CD4-positive, alpha-beta T cell (primary cell): ENCODE measurements at regions of chr10 and their contacts with region 1.

Region 1: GRCh38 chr10:123154092-123154921 is at the start of gene BUB3:
- DNase-seq: peak; percentile 80 to 99 (median 91)
- ATAC-seq: peak; percentile 89
- H3K4me3 ChIP-seq: peak within 1 kb of the TSS; percentile 95
- H3K4me3 Mint-ChIP-seq: peak within 1 kb of the TSS; percentile 100
- H3K27ac ChIP-seq: peak within 1 kb of the TSS; percentile 71 to 85
- H3K27ac Mint-ChIP-seq: peak within 1 kb of the TSS; percentile 97
- H3K4me1 ChIP-seq: peaks cover 52% of the 10 kb centered on the region
- H3K4me1 Mint-ChIP-seq: peaks cover 79% of the 10 kb centered on the region
- H3K27me3 ChIP-seq: peaks cover 21 to 22% of the 10 kb centered on the region in 2 experiments
- H3K27me3 Mint-ChIP-seq: peaks cover 23% of the 10 kb centered on the region
- CTCF ChIP-seq: no peak
- total RNA-seq, gene BUB3: 167 to 178 TPM

Region 2: DNA sequence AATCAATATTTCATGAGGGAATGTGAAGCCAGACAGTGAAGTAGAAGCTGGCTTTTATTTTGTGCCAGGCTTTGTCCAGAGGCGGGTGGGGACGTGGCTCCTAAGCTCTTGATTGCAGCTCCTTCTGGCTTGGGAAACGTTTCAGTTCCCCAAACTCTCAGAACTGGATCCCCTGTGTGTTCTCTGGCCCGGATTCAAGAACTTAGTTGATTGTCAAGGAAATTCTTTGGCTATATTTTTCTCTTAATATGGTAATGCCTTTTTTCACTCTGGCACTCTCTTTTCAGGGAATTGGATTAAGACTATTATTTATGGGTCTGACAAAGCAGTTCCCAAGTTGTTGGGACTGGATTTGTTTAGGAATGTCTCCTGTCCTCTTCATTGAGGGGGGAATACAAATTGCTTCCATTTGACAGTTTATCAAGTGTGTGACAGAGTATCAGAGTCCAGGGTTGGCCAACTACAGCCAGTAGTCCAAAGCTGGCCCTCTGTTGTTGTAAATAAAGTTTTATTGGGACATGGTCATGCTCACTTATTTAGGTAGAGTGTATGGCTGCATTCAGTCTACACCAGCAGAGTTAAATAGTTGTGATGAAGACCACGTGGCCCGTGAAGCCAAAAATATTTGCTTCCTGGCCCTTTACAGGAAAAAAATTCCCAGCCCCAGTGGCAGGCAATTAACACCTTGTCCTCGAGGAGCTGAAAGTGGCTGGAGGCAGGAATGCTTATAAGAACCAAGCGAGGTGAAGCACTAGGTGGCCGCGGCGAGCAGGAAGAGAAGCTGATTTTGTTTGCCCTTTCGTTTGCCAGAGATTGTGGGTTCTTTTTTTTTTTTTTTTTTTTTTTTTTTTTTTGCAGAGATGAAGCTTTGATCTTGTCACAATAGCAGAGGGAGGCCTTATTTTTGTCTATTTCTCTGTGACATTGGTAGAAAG is 658.6 kb before region 1 on chr10:
- CTCF ChIA-PET with region 1: no interaction called
- POLR2A ChIA-PET with region 1: no interaction called
- intact Hi-C with region 1: no loop called
- DNase-seq: peak in 6 of 14 experiments; percentile 12 to 64 (median 36)
- ATAC-seq: no peak
- H3K4me3 ChIP-seq: no peak overlapping the region
- H3K4me3 Mint-ChIP-seq: peak overlapping the region; percentile 16
- H3K27ac ChIP-seq: no peak overlapping the region
- H3K27ac Mint-ChIP-seq: peak overlapping the region; percentile 45
- H3K4me1 ChIP-seq: peaks cover 33% of the 10 kb centered on the region
- H3K4me1 Mint-ChIP-seq: peaks cover 19% of the 10 kb centered on the region
- H3K27me3 ChIP-seq: no peaks in the 10 kb centered on the region
- H3K27me3 Mint-ChIP-seq: peaks cover 7% of the 10 kb centered on the region
- CTCF ChIP-seq: no peak

Region 3: DNA sequence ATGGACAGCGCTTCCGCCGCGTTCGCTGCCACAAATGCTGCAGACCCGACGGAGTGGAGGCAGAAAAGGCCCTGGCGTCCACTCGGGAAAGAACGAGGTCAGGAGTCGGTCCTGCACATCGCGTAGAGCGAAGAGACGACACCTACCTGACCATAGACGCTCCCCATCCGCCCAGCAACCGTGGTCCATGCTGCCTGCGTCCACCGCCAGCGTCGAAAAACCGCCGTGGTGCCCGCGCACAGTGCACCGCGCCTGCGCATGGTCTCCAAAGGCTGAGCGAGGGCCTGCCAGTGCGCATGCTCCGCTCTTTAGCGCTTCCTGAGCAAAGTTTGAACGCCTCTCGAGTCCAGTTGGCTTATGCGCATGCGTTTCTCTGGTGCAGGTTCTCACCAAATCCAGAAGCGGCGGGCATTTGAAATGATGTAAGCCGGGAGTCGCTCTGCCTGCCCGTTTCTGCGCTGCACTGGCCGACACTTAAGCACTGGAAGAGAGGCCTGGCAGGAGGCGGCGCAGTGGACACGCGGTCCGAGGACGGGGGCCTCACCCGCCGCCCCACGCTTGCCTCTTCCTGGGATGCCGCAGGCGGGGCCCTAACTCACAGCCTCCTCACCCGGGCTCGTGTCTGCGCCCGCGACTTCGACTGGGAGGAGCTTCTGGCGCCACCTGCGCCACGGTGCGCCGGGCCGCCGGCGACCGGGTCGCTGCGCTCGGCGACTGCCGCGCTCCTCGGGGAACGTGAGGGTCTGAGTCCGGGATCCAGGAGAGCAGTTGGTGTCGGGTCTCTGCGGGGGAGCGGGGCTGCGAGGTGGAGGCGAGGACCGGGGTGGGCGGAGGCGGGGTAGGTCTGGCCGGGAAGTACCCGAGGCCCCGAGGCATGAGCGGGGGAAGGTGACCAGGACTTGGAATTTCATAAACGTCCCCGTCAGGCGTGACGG is 274.7 kb before region 1 on chr10 and contains the start of gene FAM24B:
- CTCF ChIA-PET with region 1: no interaction called
- POLR2A ChIA-PET with region 1: interaction called, 4 read pairs
- intact Hi-C with region 1: loop called in 1 of 2 experiments (anchors 5 kb)
- DNase-seq: peak; percentile 87 to 98 (median 94)
- ATAC-seq: peak; percentile 84
- H3K4me3 ChIP-seq: peak within 1 kb of the TSS; percentile 80
- H3K4me3 Mint-ChIP-seq: peak within 1 kb of the TSS; percentile 86
- H3K27ac ChIP-seq: peak within 1 kb of the TSS; percentile 70 to 75
- H3K27ac Mint-ChIP-seq: peak within 1 kb of the TSS; percentile 79
- H3K4me1 ChIP-seq: peaks cover 19% of the 10 kb centered on the region
- H3K4me1 Mint-ChIP-seq: peaks cover 55% of the 10 kb centered on the region
- H3K27me3 ChIP-seq: no peaks in the 10 kb centered on the region
- H3K27me3 Mint-ChIP-seq: no peaks in the 10 kb centered on the region
- CTCF ChIP-seq: no peak
- total RNA-seq, gene FAM24B: 6.8 to 7.1 TPM

Region 4: DNA sequence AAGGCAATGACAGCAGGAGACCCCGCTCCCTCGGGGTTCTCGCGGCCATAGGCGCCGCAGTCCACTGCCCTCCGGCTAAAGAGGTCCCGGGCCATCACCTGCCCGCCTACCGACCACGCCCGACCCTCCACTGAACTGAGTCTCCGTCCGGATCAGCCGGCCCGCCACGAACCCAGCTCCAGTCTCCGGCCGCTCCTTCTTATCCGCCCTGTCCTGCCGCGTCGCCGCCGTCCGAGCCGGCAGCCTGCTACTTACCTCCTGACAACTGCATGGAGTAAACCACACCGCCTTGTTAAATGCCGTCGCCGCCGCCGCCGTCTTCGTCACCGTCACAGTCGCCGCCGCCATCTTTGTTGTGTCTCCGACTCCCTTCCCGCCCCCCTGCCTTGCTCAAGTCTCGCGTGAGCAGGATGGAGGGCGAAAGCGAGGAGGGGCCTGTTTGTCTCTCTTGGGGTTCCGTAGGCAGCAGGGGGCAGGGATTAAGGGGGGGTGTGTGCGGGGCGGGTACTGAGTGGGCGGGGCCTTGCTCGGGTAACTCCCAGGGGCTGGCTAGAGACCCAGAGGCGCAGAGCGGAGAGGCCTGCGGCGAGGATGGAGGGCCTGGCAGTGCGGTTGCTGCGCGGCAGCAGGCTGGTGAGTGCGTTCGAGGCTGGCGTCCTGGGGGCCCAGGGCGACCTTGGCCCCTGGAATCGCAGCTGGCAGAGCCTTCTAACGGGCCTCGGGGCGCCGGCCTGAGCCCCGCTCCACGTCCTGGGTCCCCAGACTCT is 145.7 kb before region 1 on chr10 and contains the starts of genes ACADSB and IKZF5:
- CTCF ChIA-PET with region 1: no interaction called
- POLR2A ChIA-PET with region 1: interaction called, 32 read pairs
- intact Hi-C with region 1: loop called (anchors 2 to 5 kb)
- DNase-seq: peak; percentile 93 to 99 (median 94)
- ATAC-seq: peak; percentile 86
- H3K4me3 ChIP-seq: peak within 1 kb of the TSS; percentile 91
- H3K4me3 Mint-ChIP-seq: peak within 1 kb of the TSS; percentile 97
- H3K27ac ChIP-seq: peak within 1 kb of the TSS; percentile 94 to 99
- H3K27ac Mint-ChIP-seq: peak within 1 kb of the TSS; percentile 95
- H3K4me1 ChIP-seq: peaks cover 22% of the 10 kb centered on the region
- H3K4me1 Mint-ChIP-seq: peaks cover 68% of the 10 kb centered on the region
- H3K27me3 ChIP-seq: no peaks in the 10 kb centered on the region
- H3K27me3 Mint-ChIP-seq: no peaks in the 10 kb centered on the region
- CTCF ChIP-seq: no peak
- total RNA-seq, gene ACADSB: 16.6 to 17.9 TPM
- total RNA-seq, gene IKZF5: 81.8 to 87.1 TPM

Region 5: DNA sequence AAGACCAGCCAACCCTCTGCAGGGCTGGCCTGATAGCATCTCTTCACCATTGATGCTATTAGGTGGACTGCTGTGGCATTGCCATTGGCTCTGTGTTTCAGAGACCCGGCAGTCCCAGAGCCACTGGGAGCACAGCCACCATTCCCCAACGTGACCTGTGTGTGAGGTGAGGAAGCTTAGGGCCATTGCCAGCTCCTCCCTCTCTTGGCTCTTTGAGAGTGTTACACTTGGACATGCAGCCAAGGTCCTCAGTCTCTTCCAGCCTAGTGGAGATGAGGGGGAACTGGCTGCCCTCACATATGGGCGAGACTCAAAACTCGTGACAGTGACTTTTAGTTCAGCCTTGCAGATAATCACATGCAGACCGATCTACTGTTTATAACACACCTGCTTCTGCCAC is 57.9 kb before region 1 on chr10:
- CTCF ChIA-PET with region 1: no interaction called
- POLR2A ChIA-PET with region 1: no interaction called
- intact Hi-C with region 1: no loop called
- DNase-seq: no peak
- ATAC-seq: no peak
- H3K4me3 ChIP-seq: no peak overlapping the region
- H3K4me3 Mint-ChIP-seq: no peak overlapping the region
- H3K27ac ChIP-seq: no peak overlapping the region
- H3K27ac Mint-ChIP-seq: no peak overlapping the region
- H3K4me1 ChIP-seq: no peaks in the 10 kb centered on the region
- H3K4me1 Mint-ChIP-seq: no peaks in the 10 kb centered on the region
- H3K27me3 ChIP-seq: peaks cover 4 to 9% of the 10 kb centered on the region in 2 experiments
- H3K27me3 Mint-ChIP-seq: peaks cover 23% of the 10 kb centered on the region
- CTCF ChIP-seq: no peak

Region 6: GRCh38 chr10:123241391-123242141 is 87.3 kb after region 1 on chr10:
- CTCF ChIA-PET with region 1: interaction called, 4 read pairs
- POLR2A ChIA-PET with region 1: interaction called, 80 read pairs
- intact Hi-C with region 1: loop called (anchors 1 to 5 kb)
- DNase-seq: peak; percentile 30 to 90 (median 57)
- ATAC-seq: peak; percentile 88
- H3K4me3 ChIP-seq: no peak overlapping the region
- H3K4me3 Mint-ChIP-seq: peak overlapping the region; percentile 67
- H3K27ac ChIP-seq: peak overlapping the region; percentile 75 to 87
- H3K27ac Mint-ChIP-seq: peak overlapping the region; percentile 94
- H3K4me1 ChIP-seq: peaks cover 27% of the 10 kb centered on the region
- H3K4me1 Mint-ChIP-seq: peaks cover 36% of the 10 kb centered on the region
- H3K27me3 ChIP-seq: no peaks in the 10 kb centered on the region
- H3K27me3 Mint-ChIP-seq: no peaks in the 10 kb centered on the region
- CTCF ChIP-seq: no peak

Region 7: DNA sequence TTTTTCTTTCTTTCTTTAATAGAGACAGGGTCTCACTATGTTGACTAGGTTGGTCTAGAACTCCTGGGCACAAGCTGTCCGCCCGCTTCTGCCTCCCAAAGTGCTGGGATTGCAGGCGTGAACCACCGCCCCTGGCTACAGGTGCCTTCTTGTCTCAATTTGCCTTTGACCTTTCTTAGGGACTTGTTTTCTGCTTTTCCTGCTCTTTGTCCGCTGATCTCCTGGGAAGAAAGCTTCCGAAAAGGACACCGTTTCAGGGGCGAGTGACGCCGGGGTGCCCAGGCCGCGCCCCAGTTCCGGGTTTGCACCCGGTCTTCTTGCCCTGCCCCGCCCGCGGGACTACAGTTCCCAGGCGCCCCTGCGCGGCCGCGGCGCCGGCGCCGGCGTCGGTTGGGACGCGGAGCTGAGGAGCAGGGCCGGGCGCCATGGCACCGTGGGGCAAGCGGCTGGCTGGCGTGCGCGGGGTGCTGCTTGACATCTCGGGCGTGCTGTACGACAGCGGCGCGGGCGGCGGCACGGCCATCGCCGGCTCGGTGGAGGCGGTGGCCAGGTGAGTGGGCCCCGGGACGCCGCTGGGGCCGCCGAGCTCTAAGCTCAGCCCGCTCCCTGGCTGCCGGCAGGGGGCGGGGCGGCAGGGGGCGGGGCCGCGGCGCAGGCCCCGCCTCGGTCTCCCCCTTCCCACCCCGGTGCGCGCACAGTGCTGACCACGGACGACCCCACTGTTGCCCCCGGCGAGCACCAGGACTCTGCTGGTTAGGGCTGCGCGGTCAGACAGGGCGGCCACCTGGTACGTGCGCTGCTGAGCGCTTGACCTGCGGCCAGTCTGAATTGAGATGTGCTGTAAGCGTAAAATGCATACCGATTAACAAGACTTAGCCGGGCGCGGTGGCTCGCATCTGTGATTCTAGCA is 1307.4 kb after region 1 on chr10 and contains the start of gene LHPP:
- CTCF ChIA-PET with region 1: no interaction called
- POLR2A ChIA-PET with region 1: no interaction called
- intact Hi-C with region 1: loop called in 1 of 2 experiments (anchors 5 kb)
- DNase-seq: peak; percentile 65 to 93 (median 84)
- ATAC-seq: peak; percentile 94
- H3K4me3 ChIP-seq: peak within 1 kb of the TSS; percentile 65
- H3K4me3 Mint-ChIP-seq: peak within 1 kb of the TSS; percentile 92
- H3K27ac ChIP-seq: peak within 1 kb of the TSS; percentile 53 to 67
- H3K27ac Mint-ChIP-seq: peak within 1 kb of the TSS; percentile 83
- H3K4me1 ChIP-seq: peaks cover 36% of the 10 kb centered on the region
- H3K4me1 Mint-ChIP-seq: peaks cover 27% of the 10 kb centered on the region
- H3K27me3 ChIP-seq: peaks cover 0 to 8% of the 10 kb centered on the region in 2 experiments
- H3K27me3 Mint-ChIP-seq: peaks cover 10% of the 10 kb centered on the region
- CTCF ChIP-seq: peak; percentile 17
- total RNA-seq, gene LHPP: 15.3 to 19.6 TPM

Region 8: DNA sequence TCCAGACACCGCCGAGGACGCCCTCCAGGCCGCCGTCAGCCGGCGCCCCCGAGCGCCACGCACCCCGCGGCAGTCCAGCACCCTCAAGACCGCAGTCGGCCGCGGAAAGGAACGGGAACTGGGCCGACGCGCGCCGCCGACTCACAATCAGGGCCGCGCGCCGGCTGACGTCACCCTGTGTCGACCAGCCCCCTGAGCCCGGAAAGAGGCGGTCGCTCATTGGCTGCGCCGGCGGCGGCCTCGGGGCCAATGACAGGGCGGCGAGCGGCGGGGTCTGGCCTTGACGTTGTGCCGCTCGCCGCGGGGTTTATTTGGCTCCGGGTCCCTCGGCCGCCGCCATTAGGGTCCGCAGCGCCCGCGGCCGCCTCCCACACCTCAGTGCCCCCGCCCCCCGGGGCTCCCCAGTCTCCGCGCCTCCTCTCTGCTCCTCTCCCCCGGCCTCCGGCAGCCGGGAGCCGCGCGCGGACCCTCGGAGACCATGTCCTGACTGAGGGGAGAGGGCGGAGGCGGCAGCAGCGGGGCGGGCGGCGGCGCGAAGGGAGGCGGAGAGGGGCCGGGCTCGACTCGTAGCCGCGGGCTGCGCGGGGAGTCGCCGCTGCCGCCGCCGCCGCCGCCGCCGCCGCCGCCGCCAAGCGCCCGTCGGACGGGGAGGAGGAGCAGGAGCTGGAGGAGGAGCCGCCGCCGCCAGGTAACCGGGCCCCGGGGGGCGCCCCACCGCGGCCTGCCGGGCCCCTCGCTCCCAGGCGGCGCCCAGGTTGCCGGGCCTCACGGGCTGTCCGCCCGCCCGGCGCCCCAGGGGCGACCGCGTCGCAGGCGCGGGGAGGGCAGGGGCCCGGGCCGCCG is 1762.5 kb after region 1 on chr10:
- CTCF ChIA-PET with region 1: no interaction called
- POLR2A ChIA-PET with region 1: no interaction called
- intact Hi-C with region 1: loop called (anchors 5 to 10 kb)
- DNase-seq: peak; percentile 91 to 98 (median 96)
- ATAC-seq: peak; percentile 88
- H3K4me3 ChIP-seq: peak overlapping the region; percentile 94
- H3K4me3 Mint-ChIP-seq: peak overlapping the region; percentile 93
- H3K27ac ChIP-seq: peak overlapping the region; percentile 67 to 91
- H3K27ac Mint-ChIP-seq: peak overlapping the region; percentile 97
- H3K4me1 ChIP-seq: peaks cover 15% of the 10 kb centered on the region
- H3K4me1 Mint-ChIP-seq: peaks cover 46% of the 10 kb centered on the region
- H3K27me3 ChIP-seq: no peaks in the 10 kb centered on the region
- H3K27me3 Mint-ChIP-seq: peaks cover 5% of the 10 kb centered on the region
- CTCF ChIP-seq: no peak